Caco-2 (cell line): ENCODE measurements at regions of chr13 and their contacts with region 1.

Region 1: DNA sequence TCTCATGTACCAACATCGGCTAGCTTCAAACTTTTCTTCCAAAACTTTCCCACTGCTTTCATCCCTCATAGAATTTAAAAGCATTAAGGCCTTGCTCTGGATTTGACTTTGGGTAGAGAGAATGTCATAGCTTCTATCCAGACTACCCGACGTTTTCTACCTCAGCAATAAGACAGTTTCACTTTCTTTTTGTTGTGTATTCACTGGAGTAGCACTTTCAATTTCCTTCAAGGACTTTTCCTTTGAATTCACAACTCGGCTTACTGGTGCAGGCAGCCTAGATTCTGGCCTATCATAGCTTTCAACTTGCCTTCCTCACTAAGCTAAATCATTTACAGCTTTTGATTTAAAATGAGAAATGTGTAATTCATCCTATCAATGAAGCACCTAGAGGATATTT is 420.4 kb upstream of the GPC6 start:
- DNase-seq: no peak
- H3K4me3 ChIP-seq: no peak overlapping the region
- H3K4me3 Mint-ChIP-seq: no peak overlapping the region
- H3K27ac Mint-ChIP-seq: no peak overlapping the region
- H3K4me1 ChIP-seq: peaks cover 12% of the 10 kb centered on the region; the same call in 1 of the 2 replicates
- H3K4me1 Mint-ChIP-seq: no peaks in the 10 kb centered on the region
- H3K27me3 ChIP-seq: no peaks in the 10 kb centered on the region
- H3K27me3 Mint-ChIP-seq: no peaks in the 10 kb centered on the region
- CTCF ChIP-seq: no peak

Region 2: GRCh38 chr13:92097337-92097903 is 708.8 kb before region 1 on chr13:
- CTCF ChIA-PET with region 1: no interaction called
- POLR2A ChIA-PET with region 1: interaction called, 14 read pairs
- intact Hi-C with region 1: no loop called
- DNase-seq: no peak
- H3K4me3 ChIP-seq: no peak overlapping the region
- H3K4me3 Mint-ChIP-seq: no peak overlapping the region
- H3K27ac Mint-ChIP-seq: no peak overlapping the region
- H3K4me1 ChIP-seq: peaks cover 11% of the 10 kb centered on the region
- H3K4me1 Mint-ChIP-seq: peaks cover 8% of the 10 kb centered on the region
- H3K27me3 ChIP-seq: no peaks in the 10 kb centered on the region
- H3K27me3 Mint-ChIP-seq: no peaks in the 10 kb centered on the region
- CTCF ChIP-seq: no peak

Region 3: GRCh38 chr13:93217721-93218261 is 411.6 kb after region 1 on chr13:
- CTCF ChIA-PET with region 1: no interaction called
- POLR2A ChIA-PET with region 1: no interaction called
- intact Hi-C with region 1: no loop called
- DNase-seq: no peak
- H3K4me3 ChIP-seq: no peak overlapping the region
- H3K4me3 Mint-ChIP-seq: no peak overlapping the region
- H3K27ac Mint-ChIP-seq: no peak overlapping the region
- H3K4me1 ChIP-seq: no peaks in the 10 kb centered on the region
- H3K4me1 Mint-ChIP-seq: no peaks in the 10 kb centered on the region
- H3K27me3 ChIP-seq: no peaks in the 10 kb centered on the region
- H3K27me3 Mint-ChIP-seq: no peaks in the 10 kb centered on the region
- CTCF ChIP-seq: no peak